ENCODE measurements at regions of chr11 and their contacts with region 1.

Region 1: GRCh38 chr11:119101759-119102423 is at the start of gene DPAGT1:
- DNase-seq: peak; percentile 99
- H3K4me3 ChIP-seq: peak within 1 kb of the TSS; percentile 87
- H3K27ac ChIP-seq: peak within 1 kb of the TSS; percentile 92
- H3K4me1 ChIP-seq: peaks cover 20% of the 10 kb centered on the region
- H3K27me3 ChIP-seq: no peaks in the 10 kb centered on the region
- CTCF ChIP-seq: no peak
- total RNA-seq, gene DPAGT1: 102 and 115 TPM in 2 replicates

Region 2: DNA sequence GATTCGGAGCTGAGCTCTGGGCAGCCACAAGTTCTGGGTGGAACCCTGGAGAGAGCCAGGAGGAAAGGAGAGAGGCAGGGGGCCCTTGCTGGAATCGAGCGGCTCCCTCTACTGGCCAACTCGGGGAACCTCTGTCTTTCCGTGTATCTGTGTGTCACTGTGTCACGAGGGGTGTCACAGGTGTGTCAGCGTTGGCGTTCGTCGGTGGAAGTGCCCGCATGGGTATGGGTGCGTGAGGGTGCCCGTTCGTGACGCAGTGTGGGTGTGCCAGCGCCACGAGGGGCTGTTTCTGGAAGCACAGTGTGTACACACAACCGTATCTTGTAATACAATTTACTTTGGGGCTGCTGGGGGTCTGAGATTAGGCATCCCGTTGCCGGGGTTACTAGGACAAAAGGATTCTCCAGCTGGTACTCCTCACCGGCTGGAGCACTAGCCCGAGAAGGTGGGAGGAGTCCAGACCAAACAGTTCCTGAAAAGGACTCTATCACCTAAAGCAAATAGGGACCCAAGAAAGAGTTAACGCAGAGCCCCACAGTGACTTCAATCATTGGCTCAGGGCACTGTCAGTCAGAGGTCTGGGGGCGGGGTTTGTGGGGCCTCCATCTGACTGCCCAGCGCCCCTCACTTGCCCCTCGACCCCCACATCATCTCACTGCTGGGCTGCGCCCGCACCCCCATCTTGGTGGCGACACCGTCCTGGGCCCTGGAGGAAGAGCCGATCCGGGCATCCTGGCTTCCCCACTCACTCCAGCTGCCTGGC is 173.6 kb before region 1 on chr11:
- CTCF ChIA-PET with region 1: no interaction called
- POLR2A ChIA-PET with region 1: no interaction called
- intact Hi-C with region 1: loop called (anchors 5 kb)
- DNase-seq: peak; percentile 97
- H3K4me3 ChIP-seq: peak overlapping the region; percentile 70
- H3K27ac ChIP-seq: peak overlapping the region; percentile 60
- H3K4me1 ChIP-seq: peaks cover 33% of the 10 kb centered on the region
- H3K27me3 ChIP-seq: no peaks in the 10 kb centered on the region
- CTCF ChIP-seq: peak; percentile 99

Region 3: DNA sequence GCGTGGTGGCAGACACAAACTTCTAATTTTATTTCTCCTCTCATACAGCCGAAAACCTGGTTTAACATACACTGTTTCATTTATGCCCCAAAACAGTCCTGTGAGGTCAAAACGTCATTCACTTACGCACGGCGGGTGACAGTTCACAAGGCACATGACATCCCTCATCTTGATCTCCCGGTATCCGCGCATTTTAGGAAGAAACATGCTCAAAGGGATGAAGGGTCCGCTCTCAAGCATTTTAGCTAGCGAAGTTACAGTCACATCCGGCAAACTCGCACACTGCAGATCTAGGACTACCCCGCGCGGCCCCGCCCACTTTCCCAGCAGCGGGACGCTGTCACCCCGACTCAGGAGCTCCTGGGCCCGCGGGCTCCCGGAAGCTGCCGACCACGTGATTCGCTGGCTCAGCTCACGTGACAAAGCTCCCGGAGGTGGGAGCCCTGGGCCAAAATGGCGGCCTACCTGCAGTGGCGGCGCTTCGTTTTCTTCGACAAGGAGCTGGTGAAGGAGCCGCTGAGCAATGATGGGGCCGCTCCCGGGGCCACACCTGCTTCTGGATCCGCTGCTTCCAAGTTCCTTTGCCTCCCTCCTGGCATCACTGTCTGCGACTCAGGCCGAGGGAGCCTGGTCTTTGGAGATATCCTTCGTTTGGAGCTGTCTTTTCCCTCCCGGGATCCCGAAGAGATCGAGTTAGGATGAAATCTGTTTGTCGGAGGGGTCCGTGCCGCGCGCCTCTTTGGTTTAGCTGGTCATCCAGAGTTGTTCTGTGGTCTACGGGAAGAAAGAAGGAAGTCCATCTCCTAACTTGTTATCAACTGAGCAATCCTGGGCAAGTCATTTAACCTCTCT is 34.3 kb before region 1 on chr11 and contains the start of gene VPS11:
- CTCF ChIA-PET with region 1: interaction called, 4 read pairs
- POLR2A ChIA-PET with region 1: no interaction called
- intact Hi-C with region 1: loop called (anchors 5 kb)
- DNase-seq: peak; percentile 99
- H3K4me3 ChIP-seq: peak within 1 kb of the TSS; percentile 71
- H3K27ac ChIP-seq: peak within 1 kb of the TSS; percentile 73
- H3K4me1 ChIP-seq: peaks cover 5% of the 10 kb centered on the region
- H3K27me3 ChIP-seq: no peaks in the 10 kb centered on the region
- CTCF ChIP-seq: no peak
- total RNA-seq, gene VPS11: 26.7 and 32.4 TPM in 2 replicates

Region 4: GRCh38 chr11:119168471-119169281 is 66.8 kb after region 1 on chr11 and contains the start of gene NLRX1:
- CTCF ChIA-PET with region 1: no interaction called
- POLR2A ChIA-PET with region 1: interaction called, 13 read pairs
- intact Hi-C with region 1: no loop called
- DNase-seq: peak; percentile 86
- H3K4me3 ChIP-seq: peak within 1 kb of the TSS; percentile 57
- H3K27ac ChIP-seq: peak within 1 kb of the TSS; percentile 43
- H3K4me1 ChIP-seq: no peaks in the 10 kb centered on the region
- H3K27me3 ChIP-seq: no peaks in the 10 kb centered on the region
- CTCF ChIP-seq: peak; percentile 83
- total RNA-seq, gene NLRX1: 1.4 and 2.7 TPM in 2 replicates

Region 5: GRCh38 chr11:119323538-119324033 is 221.7 kb after region 1 on chr11:
- CTCF ChIA-PET with region 1: no interaction called
- POLR2A ChIA-PET with region 1: no interaction called
- intact Hi-C with region 1: loop called (anchors 5 kb)
- DNase-seq: peak; percentile 85
- H3K4me3 ChIP-seq: no peak overlapping the region
- H3K27ac ChIP-seq: no peak overlapping the region
- H3K4me1 ChIP-seq: peaks cover 12% of the 10 kb centered on the region
- H3K27me3 ChIP-seq: no peaks in the 10 kb centered on the region
- CTCF ChIP-seq: peak; percentile 93

Measured in A673 (cell line).